ENCODE measurements at regions of chr9 and their contacts with region 1.

Region 1: DNA sequence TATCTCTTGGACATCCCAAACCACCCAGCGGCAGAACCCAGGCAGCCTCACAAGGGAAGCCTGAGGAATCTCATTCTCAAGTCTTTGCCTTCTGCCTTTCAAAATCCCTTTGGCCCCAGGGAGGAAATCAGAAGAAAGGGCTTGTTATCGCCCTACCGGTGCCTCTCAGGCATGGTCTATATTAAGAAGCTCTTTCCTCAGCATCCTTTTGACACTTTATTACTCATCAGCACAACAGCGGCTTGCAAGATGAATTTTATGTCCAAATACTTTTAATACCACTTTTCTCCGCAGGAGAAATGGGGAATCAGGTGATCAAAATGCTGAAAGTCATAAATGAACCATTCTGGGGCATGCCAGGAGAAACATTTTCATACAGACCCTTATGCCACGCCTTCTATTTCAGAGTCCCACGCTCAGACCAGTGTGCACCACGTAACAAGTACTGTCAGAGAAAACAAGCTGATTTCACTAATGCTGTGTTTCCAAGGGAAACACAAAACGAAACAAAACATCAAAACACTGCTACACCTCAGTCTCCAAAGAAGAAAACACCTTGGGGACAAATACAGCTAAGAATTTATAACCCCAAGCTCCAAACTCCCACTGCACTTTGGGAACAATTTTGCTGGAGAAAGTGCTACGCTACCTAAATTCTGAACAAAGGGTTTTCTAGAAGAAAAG is 30.0 kb downstream of the RAPGEF1 start:
- DNase-seq: peak in 2 of 42 donors; percentile 25 to 33

Region 2: GRCh38 chr9:131610231-131610761 is 99.6 kb before region 1 on chr9:
- intact Hi-C with region 1: loop called (anchors 5 kb)
- DNase-seq: no peak

Region 3: DNA sequence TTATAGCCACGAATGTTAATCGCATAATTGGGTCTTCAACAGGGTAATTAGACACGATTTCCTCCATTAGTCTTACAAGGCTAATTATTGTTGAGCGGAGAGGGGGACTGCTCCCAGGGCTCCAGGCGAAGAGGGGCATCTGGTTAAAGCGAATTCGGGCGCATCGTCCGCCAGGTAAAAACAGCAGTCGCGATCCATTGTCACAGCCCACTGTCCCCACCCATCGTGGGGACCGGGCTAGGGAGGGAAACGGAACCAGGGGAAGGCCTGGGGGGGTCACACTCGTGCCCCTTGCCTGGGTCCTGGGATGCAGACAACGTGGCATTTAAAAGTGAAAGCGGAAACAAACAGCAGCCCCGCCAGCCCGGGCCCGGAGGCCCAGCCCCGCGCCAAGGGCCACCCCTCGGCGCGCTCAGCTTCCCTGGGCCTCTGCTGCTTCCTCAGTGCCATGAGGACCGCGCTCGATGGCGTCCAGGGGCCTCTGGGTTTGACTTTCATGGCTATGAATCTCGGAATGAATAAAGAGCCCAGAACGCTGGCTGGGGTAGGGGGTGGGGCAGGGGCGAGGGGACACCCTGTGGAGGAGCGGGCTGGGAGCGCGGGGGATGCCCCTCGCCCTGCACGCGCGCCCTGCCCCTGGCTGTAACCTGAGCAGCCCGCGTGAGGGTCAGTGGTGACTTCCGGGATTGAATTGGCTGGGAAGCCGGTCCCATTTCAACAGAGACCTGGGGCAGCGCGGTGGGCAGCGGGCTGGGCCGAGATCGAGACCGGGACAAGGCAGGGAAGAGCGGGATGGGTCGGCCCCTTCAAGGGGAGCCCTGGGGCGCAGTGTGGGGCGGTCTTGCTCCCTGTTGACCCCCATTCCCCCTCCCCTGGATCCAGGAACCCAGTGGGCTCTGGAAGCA is 1060.2 kb after region 1 on chr9:
- intact Hi-C with region 1: no loop called
- DNase-seq: peak in 36 of 42 donors; percentile 12 to 69 (median 42)

Measured in head of caudate nucleus (tissue), 42 donors.